ENCODE measurements at regions of chr11 and their contacts with region 1.

Region 1: DNA sequence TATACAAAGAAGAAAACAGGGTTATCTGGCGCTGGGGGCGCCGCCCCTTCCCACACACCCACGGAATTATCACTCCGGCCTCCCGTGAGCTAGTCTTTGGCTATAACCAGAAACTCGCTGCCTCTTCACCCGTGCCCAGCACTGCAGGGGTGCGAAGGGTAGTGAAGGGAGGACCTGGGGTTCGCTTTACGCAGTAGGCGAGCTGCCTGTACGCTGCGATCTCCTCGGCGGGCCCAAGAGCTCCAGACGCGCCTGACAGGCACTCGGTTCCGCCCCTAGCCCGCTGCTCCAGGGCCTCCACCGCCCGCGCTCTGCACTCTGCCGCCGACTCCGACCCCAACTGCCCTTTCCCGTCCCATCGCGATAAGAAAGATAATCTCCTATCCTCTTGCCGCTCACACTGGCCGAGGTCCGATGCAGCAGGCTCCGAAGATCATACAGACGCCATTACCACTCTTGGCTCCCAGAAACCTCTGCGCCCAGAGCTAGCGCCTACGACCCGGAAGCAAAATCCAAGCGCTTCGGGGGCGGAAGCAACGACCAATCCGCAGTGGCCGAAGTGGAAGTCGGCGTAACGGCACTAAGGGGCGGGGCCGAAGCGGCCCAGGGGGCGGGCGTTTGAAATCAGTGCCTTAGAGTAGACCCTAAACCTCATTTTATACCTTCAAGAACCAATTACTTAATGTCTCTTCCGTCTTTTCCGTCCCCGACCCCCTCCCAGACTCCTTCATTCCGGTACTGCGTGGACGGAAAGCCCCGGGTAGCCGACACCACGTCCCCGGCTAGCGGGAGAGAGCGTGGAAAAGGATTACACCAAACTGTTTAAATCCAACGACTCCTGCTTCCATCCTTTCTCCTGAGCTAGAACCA is at the starts of genes CWC15 and KDM4D:
- DNase-seq: peak; percentile 91 to 96 (median 93)
- H3K4me3 ChIP-seq: peak within 1 kb of the TSS; percentile 61 to 95
- H3K4me3 Mint-ChIP-seq: peak within 1 kb of the TSS; percentile 94 to 100 (median 98)
- H3K27ac ChIP-seq: peak within 1 kb of the TSS; percentile 92
- H3K27ac Mint-ChIP-seq: peak within 1 kb of the TSS; percentile 84 to 100 (median 98)
- H3K4me1 ChIP-seq: peaks cover 16% of the 10 kb centered on the region
- H3K4me1 Mint-ChIP-seq: peaks cover 14 to 35% (median 25%) of the 10 kb centered on the region in 4 donors
- H3K27me3 ChIP-seq: no peaks in the 10 kb centered on the region
- H3K27me3 Mint-ChIP-seq: no peaks in the 10 kb centered on the region
- total RNA-seq, gene CWC15: 62.7 to 69.4 TPM
- total RNA-seq, gene KDM4D: 0.32 to 0.39 TPM

Region 2: DNA sequence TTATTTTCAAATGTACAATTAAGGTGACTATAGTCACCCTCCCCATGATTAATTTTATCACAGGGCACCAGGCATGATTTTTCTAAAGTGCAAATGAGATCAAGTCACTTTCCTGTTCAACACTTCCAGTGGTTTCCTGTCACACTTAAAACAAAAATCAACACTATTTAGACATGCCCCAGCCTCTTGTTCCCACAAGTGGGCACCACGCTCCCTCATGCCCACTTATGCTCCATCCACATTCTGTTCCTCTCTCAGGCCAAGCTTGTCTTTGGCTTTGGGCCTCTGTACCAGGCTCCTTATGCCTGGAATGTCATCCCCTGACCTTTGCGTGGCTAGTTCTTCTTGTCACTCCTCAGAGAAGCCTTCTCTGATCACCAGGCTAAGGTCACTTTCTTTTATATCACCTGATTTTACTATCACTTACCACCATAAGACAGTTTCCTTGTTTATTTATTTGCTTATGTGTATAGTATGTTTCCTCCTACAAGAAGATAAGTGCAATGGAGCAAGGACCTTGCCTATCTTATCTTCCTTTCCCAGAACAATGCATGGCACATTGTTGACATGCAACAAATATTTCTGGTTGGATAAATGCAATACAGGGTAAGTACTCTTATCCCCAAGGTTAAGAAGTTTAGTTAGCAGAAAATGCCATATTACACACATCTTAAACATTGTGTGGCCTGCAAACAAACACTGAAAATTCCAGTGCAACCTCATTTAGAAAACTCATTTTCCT is 895.6 kb before region 1 on chr11:
- CTCF ChIA-PET with region 1: no interaction called
- POLR2A ChIA-PET with region 1: no interaction called
- intact Hi-C with region 1: no loop called
- DNase-seq: no peak
- H3K4me3 ChIP-seq: no peak overlapping the region
- H3K4me3 Mint-ChIP-seq: peak overlapping the region in 1 of 8 donors; percentile 33
- H3K27ac ChIP-seq: no peak overlapping the region
- H3K27ac Mint-ChIP-seq: no peak overlapping the region
- H3K4me1 ChIP-seq: no peaks in the 10 kb centered on the region
- H3K4me1 Mint-ChIP-seq: no peaks in the 10 kb centered on the region
- H3K27me3 ChIP-seq: no peaks in the 10 kb centered on the region
- H3K27me3 Mint-ChIP-seq: peaks cover 10 to 17% of the 10 kb centered on the region in 2 donors

Region 3: DNA sequence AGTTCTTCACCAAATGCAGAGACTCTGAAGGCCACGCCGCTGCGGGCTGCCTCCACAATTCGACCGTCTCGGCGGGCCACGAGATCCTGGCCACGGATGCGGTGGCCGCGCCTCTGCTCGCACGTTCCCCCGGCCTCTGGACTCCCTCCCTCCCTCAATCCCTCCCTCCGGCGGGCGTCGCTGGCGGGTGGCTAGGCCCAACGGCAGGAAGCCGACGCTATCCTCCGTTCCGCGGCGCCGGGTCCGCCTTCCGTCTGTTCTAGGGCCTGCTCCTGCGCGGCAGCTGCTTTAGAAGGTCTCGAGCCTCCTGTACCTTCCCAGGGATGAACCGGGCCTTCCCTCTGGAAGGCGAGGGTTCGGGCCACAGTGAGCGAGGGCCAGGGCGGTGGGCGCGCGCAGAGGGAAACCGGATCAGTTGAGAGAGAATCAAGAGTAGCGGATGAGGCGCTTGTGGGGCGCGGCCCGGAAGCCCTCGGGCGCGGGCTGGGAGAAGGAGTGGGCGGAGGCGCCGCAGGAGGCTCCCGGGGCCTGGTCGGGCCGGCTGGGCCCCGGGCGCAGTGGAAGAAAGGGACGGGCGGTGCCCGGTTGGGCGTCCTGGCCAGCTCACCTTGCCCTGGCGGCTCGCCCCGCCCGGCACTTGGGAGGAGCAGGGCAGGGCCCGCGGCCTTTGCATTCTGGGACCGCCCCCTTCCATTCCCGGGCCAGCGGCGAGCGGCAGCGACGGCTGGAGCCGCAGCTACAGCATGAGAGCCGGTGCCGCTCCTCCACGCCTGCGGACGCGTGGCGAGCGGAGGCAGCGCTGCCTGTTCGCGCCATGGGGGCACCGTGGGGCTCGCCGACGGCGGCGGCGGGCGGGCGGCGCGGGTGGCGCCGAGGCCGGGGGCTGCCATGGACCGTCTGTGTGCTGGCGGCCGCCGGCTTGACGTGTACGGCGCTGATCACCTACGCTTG is 429.4 kb before region 1 on chr11 and contains the start of gene FUT4:
- CTCF ChIA-PET with region 1: no interaction called
- POLR2A ChIA-PET with region 1: interaction called, 4 read pairs
- intact Hi-C with region 1: loop called (anchors 5 kb)
- DNase-seq: peak; percentile 66 to 77 (median 74)
- H3K4me3 ChIP-seq: peak within 1 kb of the TSS in 1 of 2 donors; percentile 70
- H3K4me3 Mint-ChIP-seq: peak within 1 kb of the TSS; percentile 97 to 100 (median 99)
- H3K27ac ChIP-seq: peak within 1 kb of the TSS; percentile 83
- H3K27ac Mint-ChIP-seq: peak within 1 kb of the TSS; percentile 91 to 100 (median 99)
- H3K4me1 ChIP-seq: peaks cover 44% of the 10 kb centered on the region
- H3K4me1 Mint-ChIP-seq: peaks cover 25 to 41% (median 35%) of the 10 kb centered on the region in 4 donors
- H3K27me3 ChIP-seq: no peaks in the 10 kb centered on the region
- H3K27me3 Mint-ChIP-seq: no peaks in the 10 kb centered on the region
- total RNA-seq, gene FUT4: 6.7 to 7.4 TPM

Region 4: DNA sequence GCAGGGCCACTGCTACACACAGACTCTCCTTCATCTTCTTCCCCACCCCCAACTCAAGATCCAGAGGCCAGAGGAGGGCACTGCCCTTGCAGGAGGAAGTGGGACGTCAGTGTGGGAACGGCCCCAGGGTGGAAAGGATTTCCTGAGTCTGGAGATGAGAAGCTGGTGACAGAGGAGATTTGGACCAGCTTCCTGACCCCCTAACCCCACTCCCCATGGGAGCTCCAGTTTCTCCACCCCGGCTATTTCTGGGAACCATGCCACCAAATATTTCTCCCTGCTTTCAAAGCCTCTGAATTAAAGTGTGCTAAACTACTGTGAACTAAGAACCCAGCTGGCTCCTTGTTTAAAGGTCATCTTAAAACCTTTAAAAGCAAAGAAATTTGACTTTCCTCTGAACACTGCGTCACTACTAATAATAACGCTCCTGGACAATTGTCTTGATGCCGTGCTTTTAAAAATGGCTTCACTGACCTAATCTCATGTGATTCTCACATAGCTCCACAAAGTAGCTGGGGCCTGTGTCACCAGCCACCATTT is 46.6 kb before region 1 on chr11:
- CTCF ChIA-PET with region 1: no interaction called
- POLR2A ChIA-PET with region 1: interaction called, 36 read pairs
- intact Hi-C with region 1: loop called (anchors 1 kb)
- DNase-seq: no peak
- H3K4me3 ChIP-seq: no peak overlapping the region
- H3K4me3 Mint-ChIP-seq: peak overlapping the region in 1 of 8 donors; percentile 29
- H3K27ac ChIP-seq: no peak overlapping the region
- H3K27ac Mint-ChIP-seq: peak overlapping the region in 2 of 7 donors; percentile 43 to 52
- H3K4me1 ChIP-seq: peaks cover 50% of the 10 kb centered on the region
- H3K4me1 Mint-ChIP-seq: peaks cover 35 to 67% (median 41%) of the 10 kb centered on the region in 4 donors
- H3K27me3 ChIP-seq: no peaks in the 10 kb centered on the region
- H3K27me3 Mint-ChIP-seq: peaks cover 0 to 1% of the 10 kb centered on the region in 2 donors